Testis (tissue), 5 donors: ENCODE measurements at regions of chr22 and their contacts with region 1.

Region 1: GRCh38 chr22:39462443-39463221 is 5.8 kb downstream of the MGAT3 start:
- DNase-seq: no peak
- H3K4me3 ChIP-seq: no peak overlapping the region
- H3K27ac ChIP-seq: peak overlapping the region in 1 of 2 donors; percentile 36
- H3K4me1 ChIP-seq: peaks cover 51% of the 10 kb centered on the region
- H3K27me3 ChIP-seq: no peaks in the 10 kb centered on the region
- CTCF ChIP-seq: no peak
- POLR2A ChIP-seq: no peak

Region 2: DNA sequence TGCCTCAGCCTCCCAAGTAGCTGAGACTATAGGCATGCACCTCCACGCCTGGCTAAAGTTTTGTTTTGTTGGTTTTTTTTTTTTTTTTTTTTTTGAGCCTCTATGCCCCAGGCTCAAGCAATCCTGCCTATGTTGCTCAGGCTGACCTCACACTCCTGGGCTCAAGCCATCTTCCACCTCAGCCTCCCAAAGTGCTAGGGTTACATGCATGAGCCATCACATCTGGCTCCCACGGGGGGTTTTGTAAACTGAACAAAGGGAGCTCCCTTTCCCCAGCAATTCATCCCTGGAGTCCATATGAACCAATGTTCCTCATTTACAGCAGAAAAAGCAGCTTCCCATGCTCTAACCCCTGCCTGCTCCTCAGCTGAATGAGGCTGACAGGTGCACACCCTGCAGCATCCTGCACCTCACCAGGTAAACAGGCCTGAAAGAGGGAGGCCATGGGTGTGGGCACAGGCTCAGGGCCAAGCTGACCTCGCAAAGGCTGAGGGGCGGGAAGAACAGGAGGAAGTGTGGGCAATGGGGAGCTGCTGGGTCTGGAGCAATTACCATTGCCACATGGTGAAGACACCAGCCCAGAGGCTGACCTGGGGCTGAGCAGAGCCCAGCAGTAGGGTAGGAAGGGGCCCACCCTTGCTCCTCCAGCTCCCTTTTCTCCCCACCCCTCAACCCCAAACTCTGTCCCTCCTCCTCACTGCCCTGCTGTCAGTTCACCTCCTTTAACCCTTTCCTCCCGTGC is 1546.7 kb after region 1 on chr22:
- intact Hi-C with region 1: loop called (anchors 5 kb)
- DNase-seq: no peak
- H3K4me3 ChIP-seq: no peak overlapping the region
- H3K27ac ChIP-seq: no peak overlapping the region
- H3K4me1 ChIP-seq: no peaks in the 10 kb centered on the region
- H3K27me3 ChIP-seq: no peaks in the 10 kb centered on the region
- CTCF ChIP-seq: no peak
- POLR2A ChIP-seq: no peak